Activated B cell treated with CpG ODN at 0.5 μM for 24 hours (primary cell): ENCODE measurements at regions of chr5 and their contacts with region 1.

Region 1: GRCh38 chr5:89396278-89396954 is 513.4 kb upstream of the MEF2C start:
- DNase-seq: no peak
- ATAC-seq: peak; percentile 59
- H3K4me3 Mint-ChIP-seq: peak overlapping the region; percentile 60
- H3K27ac Mint-ChIP-seq: peak overlapping the region; percentile 88
- H3K4me1 Mint-ChIP-seq: peaks cover 61% of the 10 kb centered on the region
- H3K27me3 Mint-ChIP-seq: no peaks in the 10 kb centered on the region
- CTCF ChIP-seq: no peak

Region 2: DNA sequence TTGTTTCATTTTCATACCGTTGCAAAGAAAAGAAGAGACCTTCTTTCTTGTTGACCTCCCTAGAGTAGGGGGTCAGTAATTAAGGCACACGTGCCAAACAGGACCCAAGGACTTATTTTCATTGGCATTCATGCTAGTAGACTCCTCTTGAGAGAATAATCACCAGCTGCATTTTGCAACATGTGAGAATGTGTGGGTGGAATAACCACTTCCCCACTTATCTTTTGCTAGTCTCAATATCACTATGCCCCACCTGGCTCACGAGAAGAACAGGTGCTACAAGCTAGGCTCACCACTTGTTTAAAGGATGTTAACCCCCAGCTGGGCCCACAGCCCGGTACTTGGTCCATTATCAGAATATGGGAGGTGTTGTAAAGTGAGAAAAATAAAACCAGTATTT is 52.8 kb before region 1 on chr5:
- CTCF ChIA-PET with region 1: no interaction called
- POLR2A ChIA-PET with region 1: interaction called, 4 read pairs
- intact Hi-C with region 1: loop called (anchors 2 kb)
- DNase-seq: peak; percentile 29
- ATAC-seq: peak; percentile 79
- H3K4me3 Mint-ChIP-seq: peak overlapping the region; percentile 42
- H3K27ac Mint-ChIP-seq: peak overlapping the region; percentile 80
- H3K4me1 Mint-ChIP-seq: peaks cover 49% of the 10 kb centered on the region
- H3K27me3 Mint-ChIP-seq: no peaks in the 10 kb centered on the region
- CTCF ChIP-seq: no peak

Region 3: DNA sequence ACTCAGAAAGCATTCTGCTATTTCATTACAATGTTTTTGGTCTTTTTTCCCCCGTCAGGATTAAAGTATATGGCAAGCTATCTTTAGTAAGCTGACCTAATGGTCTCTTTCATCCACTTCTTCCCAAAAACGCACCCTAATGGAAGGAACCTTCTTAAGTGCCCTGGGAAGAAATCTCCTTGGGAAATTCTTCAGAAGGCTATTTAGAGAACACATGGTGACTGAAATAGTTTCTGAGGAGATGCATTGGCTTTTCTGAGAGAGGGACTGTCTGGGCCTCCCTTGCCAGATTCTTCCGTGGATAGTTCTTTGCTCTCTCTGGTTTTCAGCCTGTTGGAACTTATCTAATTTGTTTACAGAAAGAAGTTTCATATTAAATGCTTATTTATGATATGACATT is 10.6 kb after region 1 on chr5:
- CTCF ChIA-PET with region 1: no interaction called
- POLR2A ChIA-PET with region 1: no interaction called
- intact Hi-C with region 1: loop called (anchors 1 kb)
- DNase-seq: no peak
- ATAC-seq: no peak
- H3K4me3 Mint-ChIP-seq: no peak overlapping the region
- H3K27ac Mint-ChIP-seq: no peak overlapping the region
- H3K4me1 Mint-ChIP-seq: peaks cover 5% of the 10 kb centered on the region
- H3K27me3 Mint-ChIP-seq: no peaks in the 10 kb centered on the region
- CTCF ChIP-seq: no peak

Region 4: DNA sequence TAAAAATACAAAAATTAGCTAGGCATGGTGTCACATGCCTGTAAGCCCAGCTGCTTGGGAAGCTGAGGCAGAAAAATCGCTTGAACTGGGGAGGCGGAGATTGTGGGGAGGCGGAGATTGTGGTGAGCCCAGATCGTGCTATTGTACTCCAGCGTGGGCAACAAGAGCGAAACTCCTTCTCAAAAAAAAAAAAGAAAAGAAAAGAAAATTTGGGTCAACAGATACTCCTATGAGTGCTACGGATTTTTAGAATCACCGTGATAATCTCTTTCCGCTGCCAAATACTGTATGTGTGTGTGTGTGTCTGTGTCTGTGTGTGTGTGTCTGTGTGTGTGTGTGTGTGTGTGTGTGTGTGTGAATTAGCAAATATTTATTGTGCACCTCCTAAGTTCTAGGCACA is 1922.3 kb after region 1 on chr5:
- CTCF ChIA-PET with region 1: no interaction called
- POLR2A ChIA-PET with region 1: no interaction called
- intact Hi-C with region 1: no loop called
- DNase-seq: no peak
- ATAC-seq: no peak
- H3K4me3 Mint-ChIP-seq: no peak overlapping the region
- H3K27ac Mint-ChIP-seq: no peak overlapping the region
- H3K4me1 Mint-ChIP-seq: peaks cover 27% of the 10 kb centered on the region
- H3K27me3 Mint-ChIP-seq: peaks cover 2% of the 10 kb centered on the region
- CTCF ChIP-seq: no peak